Naive thymus-derived CD8-positive, alpha-beta T cell (primary cell): ENCODE measurements at regions of chr3 and their contacts with region 1.

Region 1: GRCh38 chr3:40452876-40453730 is 4.0 kb upstream of the RPL14 start:
- DNase-seq: peak; percentile 85 to 98 (median 94)
- ATAC-seq: peak; percentile 90
- H3K4me3 Mint-ChIP-seq: peak overlapping the region; percentile 91 to 98 (median 96)
- H3K27ac Mint-ChIP-seq: peak overlapping the region; percentile 97 to 100 (median 100)
- H3K4me1 Mint-ChIP-seq: peaks cover 18 to 44% (median 42%) of the 10 kb centered on the region in 4 donors
- H3K27me3 Mint-ChIP-seq: peaks cover 0 to 1% (median 0%) of the 10 kb centered on the region in 5 donors

Region 2: DNA sequence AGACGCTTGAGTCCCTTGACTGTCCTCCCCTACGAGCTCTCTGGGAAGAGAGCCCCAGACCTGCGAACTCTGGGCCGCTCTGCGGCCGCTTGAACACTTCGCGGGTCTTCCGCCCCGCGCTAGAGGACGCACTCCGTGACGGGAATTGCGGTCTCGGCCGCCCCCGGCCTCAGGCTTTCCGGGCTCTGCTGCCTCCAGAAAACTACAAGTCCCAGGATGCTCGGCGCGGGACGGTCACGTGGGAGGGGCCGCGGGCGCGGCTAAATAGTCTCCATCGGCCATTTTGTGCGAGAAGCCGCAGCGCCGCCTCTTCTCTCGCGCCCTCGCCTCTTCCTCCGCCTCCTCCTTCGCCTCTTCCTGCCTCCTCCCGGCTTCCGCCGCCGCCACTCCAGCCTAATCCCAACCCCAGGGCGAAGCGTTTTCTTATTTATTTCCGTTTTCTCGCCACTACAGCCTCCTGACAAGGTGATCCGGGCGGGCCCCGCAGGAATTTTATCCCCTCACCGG is 143.6 kb before region 1 on chr3 and contains the start of gene EIF1B:
- POLR2A ChIA-PET with region 1: interaction called, 17 read pairs
- DNase-seq: peak; percentile 96 to 99 (median 98)
- ATAC-seq: peak; percentile 87 to 91
- H3K4me3 Mint-ChIP-seq: peak within 1 kb of the TSS; percentile 98 to 100 (median 99)
- H3K27ac Mint-ChIP-seq: peak within 1 kb of the TSS; percentile 98 to 100 (median 99)
- H3K4me1 Mint-ChIP-seq: peaks cover 9 to 44% (median 34%) of the 10 kb centered on the region in 4 donors
- H3K27me3 Mint-ChIP-seq: no peaks in the 10 kb centered on the region
- polyA plus RNA-seq, gene EIF1B: 38.9 to 47.9 (median 44.2) TPM

Region 3: GRCh38 chr3:40417845-40418543 is 35.1 kb before region 1 on chr3:
- POLR2A ChIA-PET with region 1: no interaction called
- DNase-seq: no peak
- ATAC-seq: no peak
- H3K4me3 Mint-ChIP-seq: no peak overlapping the region
- H3K27ac Mint-ChIP-seq: no peak overlapping the region
- H3K4me1 Mint-ChIP-seq: peaks cover under 1 to 5% (median 2%) of the 10 kb centered on the region in 4 donors
- H3K27me3 Mint-ChIP-seq: peaks cover under 1 to 19% (median 5%) of the 10 kb centered on the region in 5 donors

Region 4: GRCh38 chr3:40476478-40477470 is 23.7 kb after region 1 on chr3 and contains the start of gene ZNF619:
- POLR2A ChIA-PET with region 1: interaction called, 21 read pairs
- DNase-seq: peak; percentile 9 to 74 (median 44)
- ATAC-seq: peak; percentile 80 to 89
- H3K4me3 Mint-ChIP-seq: peak within 1 kb of the TSS; percentile 88 to 96 (median 93)
- H3K27ac Mint-ChIP-seq: peak within 1 kb of the TSS; percentile 85 to 98 (median 96)
- H3K4me1 Mint-ChIP-seq: peaks cover 12 to 29% (median 24%) of the 10 kb centered on the region in 4 donors
- H3K27me3 Mint-ChIP-seq: no peaks in the 10 kb centered on the region
- polyA plus RNA-seq, gene ZNF619: 2.3 to 3.1 (median 3.0) TPM